CD4-positive, alpha-beta memory T cell (primary cell): ENCODE measurements at regions of chr17 and their contacts with region 1.

Region 1: DNA sequence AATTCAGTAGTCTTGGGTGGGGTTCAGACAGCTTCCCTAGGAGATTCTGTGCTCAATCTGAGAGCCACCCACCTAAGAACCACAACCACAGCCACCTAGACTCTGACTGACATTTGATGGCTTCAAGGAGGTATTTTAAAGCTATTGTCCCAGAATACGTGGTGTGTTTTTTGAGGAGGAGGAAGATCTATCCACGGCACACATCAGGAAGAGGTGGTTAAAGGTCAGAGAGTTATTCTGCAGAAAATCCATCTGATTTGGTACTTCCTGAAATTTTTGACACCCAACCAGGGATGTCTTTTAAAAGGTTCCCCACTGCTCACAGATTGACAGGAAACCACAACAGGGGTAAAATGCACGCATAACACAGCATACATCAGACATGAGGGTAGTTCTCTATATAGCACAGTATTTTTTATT is 25.1 kb downstream of the SMARCE1 start:
- DNase-seq: peak; percentile 34 to 59 (median 46)
- H3K4me3 ChIP-seq: no peak overlapping the region
- H3K4me3 Mint-ChIP-seq: peak overlapping the region in 7 of 8 donors; percentile 1 to 74 (median 49)
- H3K27ac ChIP-seq: peak overlapping the region; percentile 7
- H3K27ac Mint-ChIP-seq: peak overlapping the region; percentile 37 to 88 (median 72)
- H3K4me1 ChIP-seq: peaks cover 51% of the 10 kb centered on the region
- H3K4me1 Mint-ChIP-seq: peaks cover 31 to 42% (median 38%) of the 10 kb centered on the region in 4 donors
- H3K27me3 ChIP-seq: no peaks in the 10 kb centered on the region
- H3K27me3 Mint-ChIP-seq: no peaks in the 10 kb centered on the region

Region 2: GRCh38 chr17:40062329-40063186 is 560.0 kb before region 1 on chr17 and contains the start of gene THRA:
- CTCF ChIA-PET with region 1: no interaction called
- POLR2A ChIA-PET with region 1: no interaction called
- intact Hi-C with region 1: no loop called
- DNase-seq: peak; percentile 71 to 75 (median 73)
- H3K4me3 ChIP-seq: peak within 1 kb of the TSS; percentile 57 to 70
- H3K4me3 Mint-ChIP-seq: peak within 1 kb of the TSS; percentile 90 to 96 (median 94)
- H3K27ac ChIP-seq: peak within 1 kb of the TSS; percentile 70
- H3K27ac Mint-ChIP-seq: peak within 1 kb of the TSS; percentile 81 to 96 (median 91)
- H3K4me1 ChIP-seq: peaks cover 49% of the 10 kb centered on the region
- H3K4me1 Mint-ChIP-seq: peaks cover 33 to 53% (median 42%) of the 10 kb centered on the region in 4 donors
- H3K27me3 ChIP-seq: peaks cover 3% of the 10 kb centered on the region
- H3K27me3 Mint-ChIP-seq: peaks cover 1% of the 10 kb centered on the region in 2 donors
- total RNA-seq, gene THRA: 35.9 to 41.3 TPM

Region 3: DNA sequence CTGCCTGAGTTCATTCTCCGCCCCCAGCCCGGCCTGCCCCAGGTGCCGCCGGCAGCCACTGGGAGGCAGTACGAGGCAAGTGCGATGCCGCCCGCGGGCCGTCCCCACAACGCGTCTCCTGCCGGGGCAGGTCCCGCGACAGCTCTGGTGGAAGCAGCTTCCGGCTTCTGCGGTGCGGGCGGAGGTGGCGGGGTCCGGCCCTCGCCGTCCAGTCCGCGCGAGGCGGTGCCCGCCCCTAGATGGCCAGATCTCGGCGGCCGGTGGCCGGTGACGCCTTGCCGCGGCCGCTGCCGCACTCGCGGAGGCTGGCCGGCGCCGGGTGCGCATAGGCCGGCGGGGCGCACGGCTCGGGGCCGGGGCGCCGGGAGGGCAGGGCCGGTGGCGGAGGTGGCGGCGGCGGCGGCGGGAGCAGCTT is 259.8 kb before region 1 on chr17:
- CTCF ChIA-PET with region 1: interaction called, 3 read pairs
- POLR2A ChIA-PET with region 1: no interaction called
- intact Hi-C with region 1: loop called (anchors 5 kb)
- DNase-seq: peak; percentile 72 to 76 (median 74)
- H3K4me3 ChIP-seq: peak overlapping the region in 1 of 2 donors; percentile 47
- H3K4me3 Mint-ChIP-seq: peak overlapping the region in 7 of 8 donors; percentile 39 to 82 (median 64)
- H3K27ac ChIP-seq: no peak overlapping the region
- H3K27ac Mint-ChIP-seq: peak overlapping the region in 3 of 7 donors; percentile 11 to 69 (median 57)
- H3K4me1 ChIP-seq: peaks cover 21% of the 10 kb centered on the region
- H3K4me1 Mint-ChIP-seq: peaks cover 5 to 12% (median 9%) of the 10 kb centered on the region in 4 donors
- H3K27me3 ChIP-seq: no peaks in the 10 kb centered on the region
- H3K27me3 Mint-ChIP-seq: peaks cover 0 to 7% of the 10 kb centered on the region in 2 donors

Region 4: DNA sequence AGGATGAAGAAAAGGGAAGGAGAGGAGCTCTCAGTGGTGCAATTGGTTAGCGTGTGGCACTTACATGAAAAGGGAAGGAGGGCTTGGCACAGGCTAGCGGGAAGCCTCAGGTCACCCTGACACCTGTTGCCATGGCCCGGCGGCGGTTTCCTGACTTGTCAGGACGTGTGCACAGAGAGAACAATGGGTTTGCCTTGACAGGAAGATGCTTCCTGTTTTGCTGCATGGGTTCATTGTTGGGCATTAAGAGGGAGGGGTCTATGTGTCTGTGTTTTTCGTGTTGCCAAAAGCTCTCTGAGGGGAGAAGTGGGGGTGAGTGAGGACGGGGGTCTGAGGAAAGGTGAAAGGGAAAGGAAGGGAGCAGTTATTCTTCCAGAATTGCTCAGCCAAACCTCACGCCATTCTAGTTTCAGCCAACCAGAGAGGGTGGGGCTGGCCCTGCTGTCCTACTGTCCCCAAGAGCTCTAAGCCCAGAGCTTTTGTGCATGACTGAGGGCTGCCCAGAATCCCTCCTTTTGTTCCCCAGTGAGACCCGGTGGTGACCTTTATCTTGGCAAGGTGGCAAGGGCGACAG is 40.1 kb before region 1 on chr17:
- CTCF ChIA-PET with region 1: interaction called, 11 read pairs
- POLR2A ChIA-PET with region 1: interaction called, 5 read pairs
- intact Hi-C with region 1: no loop called
- DNase-seq: peak; percentile 74 to 78 (median 76)
- H3K4me3 ChIP-seq: peak overlapping the region; percentile 28 to 34
- H3K4me3 Mint-ChIP-seq: peak overlapping the region; percentile 32 to 84 (median 80)
- H3K27ac ChIP-seq: peak overlapping the region; percentile 47
- H3K27ac Mint-ChIP-seq: peak overlapping the region; percentile 75 to 96 (median 95)
- H3K4me1 ChIP-seq: peaks cover 72% of the 10 kb centered on the region
- H3K4me1 Mint-ChIP-seq: peaks cover 57 to 95% (median 78%) of the 10 kb centered on the region in 4 donors
- H3K27me3 ChIP-seq: no peaks in the 10 kb centered on the region
- H3K27me3 Mint-ChIP-seq: no peaks in the 10 kb centered on the region

Region 5: DNA sequence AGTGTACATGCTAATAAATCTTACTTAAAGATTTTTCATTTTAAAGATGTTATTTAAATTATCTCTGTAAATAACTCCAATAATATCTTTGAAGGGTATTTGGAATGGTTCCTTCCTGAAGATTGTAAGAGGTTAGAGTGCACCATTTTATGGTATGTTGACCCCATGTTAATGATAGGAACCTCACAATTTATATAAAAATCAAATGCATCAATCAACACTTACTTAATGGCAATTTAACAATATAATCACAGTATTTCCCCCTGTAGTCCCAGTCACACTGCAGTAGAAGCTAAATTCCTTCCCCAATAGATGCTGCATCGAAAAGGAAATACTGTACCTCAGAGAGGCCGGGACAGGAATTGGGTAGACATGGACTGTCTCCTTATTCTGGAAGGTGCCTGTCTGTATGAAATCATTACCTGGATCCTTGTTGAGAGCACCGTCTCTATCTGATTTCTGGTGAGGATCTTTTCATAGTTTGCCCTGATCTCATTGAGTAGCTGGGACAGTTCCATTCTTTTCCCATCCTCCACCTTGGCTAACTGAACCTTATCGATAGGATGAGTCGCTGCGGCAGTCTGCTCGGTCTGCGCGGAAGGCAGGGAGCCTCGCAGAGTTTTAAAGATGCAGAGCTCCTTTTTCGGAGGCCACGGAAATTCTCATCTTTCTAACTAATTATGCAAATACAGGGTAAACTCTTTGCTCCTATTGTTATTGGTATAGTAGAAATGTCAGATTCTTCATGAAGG is 42.2 kb after region 1 on chr17 and contains the start of gene KRT222:
- CTCF ChIA-PET with region 1: no interaction called
- POLR2A ChIA-PET with region 1: no interaction called
- intact Hi-C with region 1: no loop called
- DNase-seq: no peak
- H3K4me3 ChIP-seq: no peak within 1 kb of the TSS
- H3K4me3 Mint-ChIP-seq: peak within 1 kb of the TSS in 1 of 8 donors; percentile 56
- H3K27ac ChIP-seq: no peak within 1 kb of the TSS
- H3K27ac Mint-ChIP-seq: peak within 1 kb of the TSS in 1 of 7 donors; percentile 36
- H3K4me1 ChIP-seq: peaks cover 4% of the 10 kb centered on the region
- H3K4me1 Mint-ChIP-seq: peaks cover 0 to 5% (median 3%) of the 10 kb centered on the region in 4 donors
- H3K27me3 ChIP-seq: peaks cover 8% of the 10 kb centered on the region
- H3K27me3 Mint-ChIP-seq: peaks cover 9 to 23% of the 10 kb centered on the region in 2 donors
- total RNA-seq, gene KRT222: not detected

Region 6: GRCh38 chr17:40678902-40679522 is 56.5 kb after region 1 on chr17:
- CTCF ChIA-PET with region 1: no interaction called
- POLR2A ChIA-PET with region 1: no interaction called
- intact Hi-C with region 1: no loop called
- DNase-seq: no peak
- H3K4me3 ChIP-seq: no peak overlapping the region
- H3K4me3 Mint-ChIP-seq: no peak overlapping the region
- H3K27ac ChIP-seq: no peak overlapping the region
- H3K27ac Mint-ChIP-seq: no peak overlapping the region
- H3K4me1 ChIP-seq: no peaks in the 10 kb centered on the region
- H3K4me1 Mint-ChIP-seq: no peaks in the 10 kb centered on the region
- H3K27me3 ChIP-seq: peaks cover 5% of the 10 kb centered on the region
- H3K27me3 Mint-ChIP-seq: peaks cover 26 to 44% of the 10 kb centered on the region in 2 donors

Region 7: DNA sequence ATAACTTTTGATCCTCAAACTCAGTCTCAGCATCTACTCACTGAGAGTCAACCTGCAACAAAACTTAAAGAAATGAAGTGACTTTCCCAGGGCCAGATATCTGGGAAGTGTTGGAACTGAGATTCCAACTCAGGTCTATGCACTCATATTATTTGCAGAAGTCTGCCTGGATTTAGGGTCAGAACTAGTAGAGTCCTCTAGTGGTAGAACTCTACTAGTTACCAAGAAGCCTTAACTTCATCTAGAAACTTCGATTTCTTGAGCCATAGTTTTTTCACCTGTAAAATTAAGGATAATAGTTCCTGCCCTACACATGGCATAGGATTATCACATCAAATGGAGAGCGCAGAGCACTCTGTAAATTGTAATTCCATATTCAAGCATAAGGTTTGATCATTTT is 104.4 kb after region 1 on chr17:
- CTCF ChIA-PET with region 1: interaction called, 10 read pairs
- POLR2A ChIA-PET with region 1: no interaction called
- intact Hi-C with region 1: loop called (anchors 1 kb)
- DNase-seq: peak in 4 of 5 donors; percentile 11 to 27 (median 17)
- H3K4me3 ChIP-seq: no peak overlapping the region
- H3K4me3 Mint-ChIP-seq: no peak overlapping the region
- H3K27ac ChIP-seq: no peak overlapping the region
- H3K27ac Mint-ChIP-seq: no peak overlapping the region
- H3K4me1 ChIP-seq: no peaks in the 10 kb centered on the region
- H3K4me1 Mint-ChIP-seq: no peaks in the 10 kb centered on the region
- H3K27me3 ChIP-seq: peaks cover 10% of the 10 kb centered on the region
- H3K27me3 Mint-ChIP-seq: peaks cover 14 to 19% of the 10 kb centered on the region in 2 donors